ENCODE measurements at regions of chr1 and their contacts with region 1.

Region 1: GRCh38 chr1:160489513-160490261 is 33.4 kb downstream of the SLAMF6 start:
- DNase-seq: no peak

Region 2: DNA sequence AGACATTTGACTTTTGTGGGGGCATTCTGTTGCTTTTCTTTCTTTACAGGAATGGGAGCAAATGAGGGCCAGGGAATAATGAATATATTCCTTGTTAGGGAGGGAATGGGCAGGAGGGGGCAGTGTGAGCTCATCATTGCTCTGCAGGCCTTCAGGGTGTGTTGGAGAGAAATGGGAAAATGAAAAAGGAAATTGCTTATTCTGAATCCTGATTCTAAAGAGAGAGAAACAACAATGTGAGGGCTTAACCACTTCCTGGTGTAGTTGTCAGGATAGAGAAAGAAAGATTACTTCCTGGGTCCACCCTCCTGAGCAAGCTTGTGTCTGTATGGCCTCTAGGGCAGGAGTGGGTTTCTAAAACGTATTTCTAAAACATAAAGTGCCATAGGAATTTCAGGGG is 61.0 kb before region 1 on chr1:
- in situ Hi-C with region 1: loop called (anchors 10 kb)
- DNase-seq: peak; percentile 81